Activated T-helper 1 cell treated with anti-CD3 and anti-CD28 coated beads, Interleukin-12 subunit alpha, Interleukin-12 subunit beta, Interleukin-2, Interleukin-4 antibody, amounts not matched to agents 30 ng/mL and 10 ng/mL and 1 ng/mL, durations not matched to agents 14 hours and 24 hours and 36 hours (primary cell): ENCODE measurements at regions of chr3 and their contacts with region 1.

Region 1: DNA sequence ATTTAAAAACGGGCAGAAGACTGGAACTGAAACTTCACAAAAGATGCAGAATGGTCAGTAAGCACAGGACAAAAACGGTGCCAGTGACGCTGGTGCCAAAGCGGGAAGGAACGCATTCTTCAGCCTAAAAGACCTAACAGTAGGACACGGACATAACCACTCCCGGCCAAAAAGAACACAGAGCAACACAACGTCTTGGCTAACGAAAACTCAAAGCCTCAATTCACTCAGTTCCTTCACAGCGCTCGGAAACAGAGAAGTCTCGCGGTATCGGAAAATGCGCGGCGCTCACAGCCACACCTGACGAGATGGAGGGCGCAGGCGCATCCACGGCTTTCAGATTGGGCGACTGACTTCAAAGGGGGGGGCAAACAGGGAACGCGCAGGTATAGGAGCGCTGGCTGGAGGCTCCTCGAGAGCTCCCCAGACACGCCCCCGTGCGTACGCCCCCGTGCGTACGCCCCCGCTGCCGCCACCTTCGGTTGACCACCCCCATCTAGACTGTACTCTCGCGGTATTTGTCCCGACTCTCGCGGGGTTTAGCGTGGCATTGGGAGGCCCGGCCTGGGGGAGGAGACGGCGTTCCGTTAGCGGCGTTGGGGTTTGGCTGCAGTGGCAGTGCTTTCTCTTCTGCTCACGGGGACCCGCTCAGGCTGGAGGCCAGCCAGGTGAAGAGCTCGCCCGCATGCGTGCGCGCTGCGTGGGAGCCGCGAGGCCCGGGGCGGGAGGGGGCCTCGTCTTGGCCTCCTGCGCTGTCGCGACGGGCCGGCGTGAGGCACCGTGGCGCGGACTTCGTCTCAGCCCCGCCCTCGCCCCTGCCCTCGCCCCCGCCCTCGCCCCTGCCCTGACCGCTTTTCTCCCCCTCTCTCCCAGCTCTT is at the start of gene NKTR:
- DNase-seq: peak; percentile 99
- H3K4me3 Mint-ChIP-seq: peak within 1 kb of the TSS; percentile 91
- H3K27ac Mint-ChIP-seq: peak within 1 kb of the TSS; percentile 98
- H3K4me1 Mint-ChIP-seq: peaks cover 40% of the 10 kb centered on the region
- H3K27me3 Mint-ChIP-seq: no peaks in the 10 kb centered on the region
- total RNA-seq, gene NKTR: 76.9 and 79.7 TPM in 2 replicates

Region 2: GRCh38 chr3:42486814-42487565 is 113.4 kb before region 1 on chr3:
- intact Hi-C with region 1: no loop called
- DNase-seq: no peak
- H3K4me3 Mint-ChIP-seq: no peak overlapping the region
- H3K27ac Mint-ChIP-seq: no peak overlapping the region
- H3K4me1 Mint-ChIP-seq: no peaks in the 10 kb centered on the region
- H3K27me3 Mint-ChIP-seq: peaks cover 17% of the 10 kb centered on the region

Region 3: DNA sequence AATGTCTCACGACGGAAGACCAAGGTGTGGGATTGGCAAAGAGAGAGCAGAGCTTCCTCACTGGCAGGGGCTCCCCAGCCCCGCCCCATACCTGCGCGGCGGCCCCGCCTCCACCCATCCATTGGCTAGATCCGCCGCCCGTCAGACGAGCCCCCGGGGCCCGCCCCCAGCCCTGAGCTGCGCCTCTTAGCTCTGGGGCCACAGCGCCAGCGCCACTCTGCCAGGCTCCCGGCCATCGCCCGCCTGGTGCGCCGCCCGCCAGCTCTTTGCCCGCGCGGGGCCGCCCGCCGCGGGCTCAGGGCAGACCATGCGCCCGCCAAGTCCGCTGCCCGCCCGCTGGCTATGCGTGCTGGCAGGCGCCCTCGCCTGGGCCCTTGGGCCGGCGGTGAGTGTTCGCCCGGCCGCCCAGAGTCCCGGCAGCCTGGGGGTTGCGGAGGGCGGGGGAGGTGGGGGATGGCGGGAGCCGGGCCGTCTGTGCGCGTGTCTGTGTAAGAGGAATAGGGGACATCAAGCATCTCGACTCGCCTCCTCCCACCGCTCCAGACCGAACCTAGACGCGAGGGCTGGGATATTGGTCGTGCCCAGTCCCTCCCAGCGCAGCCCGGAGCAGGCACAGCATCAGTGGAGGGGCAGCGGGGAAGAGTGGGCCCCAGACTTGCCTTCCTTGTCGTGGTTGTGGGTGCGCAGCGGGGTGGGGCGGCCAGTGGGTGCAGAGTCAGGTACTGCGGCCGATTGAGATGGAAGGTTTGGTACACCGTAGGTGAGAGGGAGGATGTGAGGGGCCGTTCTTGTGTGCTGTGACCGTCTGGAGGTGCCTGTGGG is 97.7 kb before region 1 on chr3 and contains the start of gene VIPR1:
- intact Hi-C with region 1: loop called (anchors 1 kb)
- DNase-seq: peak; percentile 85
- H3K4me3 Mint-ChIP-seq: peak within 1 kb of the TSS; percentile 86
- H3K27ac Mint-ChIP-seq: no peak within 1 kb of the TSS
- H3K4me1 Mint-ChIP-seq: peaks cover 31% of the 10 kb centered on the region
- H3K27me3 Mint-ChIP-seq: peaks cover 26% of the 10 kb centered on the region
- total RNA-seq, gene VIPR1: 0.69 and 0.88 TPM in 2 replicates

Region 4: GRCh38 chr3:42556089-42556632 is 44.2 kb before region 1 on chr3:
- intact Hi-C with region 1: loop called (anchors 1 kb)
- DNase-seq: peak; percentile 52
- H3K4me3 Mint-ChIP-seq: peak overlapping the region; percentile 52
- H3K27ac Mint-ChIP-seq: peak overlapping the region; percentile 94
- H3K4me1 Mint-ChIP-seq: peaks cover 41% of the 10 kb centered on the region
- H3K27me3 Mint-ChIP-seq: no peaks in the 10 kb centered on the region

Region 5: GRCh38 chr3:42581709-42582473 is 18.5 kb before region 1 on chr3 and contains the start of gene SEC22C:
- intact Hi-C with region 1: loop called (anchors 1 kb)
- DNase-seq: peak; percentile 93
- H3K4me3 Mint-ChIP-seq: peak within 1 kb of the TSS; percentile 90
- H3K27ac Mint-ChIP-seq: peak within 1 kb of the TSS; percentile 93
- H3K4me1 Mint-ChIP-seq: peaks cover 61% of the 10 kb centered on the region
- H3K27me3 Mint-ChIP-seq: peaks cover 1% of the 10 kb centered on the region
- total RNA-seq, gene SEC22C: 37.5 and 38.3 TPM in 2 replicates

Region 6: GRCh38 chr3:42652611-42653302 is 52.4 kb after region 1 on chr3:
- intact Hi-C with region 1: loop called (anchors 2 kb)
- DNase-seq: no peak
- H3K4me3 Mint-ChIP-seq: peak overlapping the region; percentile 85
- H3K27ac Mint-ChIP-seq: peak overlapping the region; percentile 63
- H3K4me1 Mint-ChIP-seq: peaks cover 23% of the 10 kb centered on the region
- H3K27me3 Mint-ChIP-seq: peaks cover 5% of the 10 kb centered on the region

Region 7: GRCh38 chr3:42772670-42773408 is 172.5 kb after region 1 on chr3 and contains the start of gene CCDC13:
- intact Hi-C with region 1: loop called (anchors 1 kb)
- DNase-seq: peak; percentile 86
- H3K4me3 Mint-ChIP-seq: peak within 1 kb of the TSS; percentile 85
- H3K27ac Mint-ChIP-seq: peak within 1 kb of the TSS; percentile 85
- H3K4me1 Mint-ChIP-seq: peaks cover 12% of the 10 kb centered on the region
- H3K27me3 Mint-ChIP-seq: peaks cover 9% of the 10 kb centered on the region
- total RNA-seq, gene CCDC13: 0.32 TPM in 1 of 2 replicates, not detected in the other

Region 8: DNA sequence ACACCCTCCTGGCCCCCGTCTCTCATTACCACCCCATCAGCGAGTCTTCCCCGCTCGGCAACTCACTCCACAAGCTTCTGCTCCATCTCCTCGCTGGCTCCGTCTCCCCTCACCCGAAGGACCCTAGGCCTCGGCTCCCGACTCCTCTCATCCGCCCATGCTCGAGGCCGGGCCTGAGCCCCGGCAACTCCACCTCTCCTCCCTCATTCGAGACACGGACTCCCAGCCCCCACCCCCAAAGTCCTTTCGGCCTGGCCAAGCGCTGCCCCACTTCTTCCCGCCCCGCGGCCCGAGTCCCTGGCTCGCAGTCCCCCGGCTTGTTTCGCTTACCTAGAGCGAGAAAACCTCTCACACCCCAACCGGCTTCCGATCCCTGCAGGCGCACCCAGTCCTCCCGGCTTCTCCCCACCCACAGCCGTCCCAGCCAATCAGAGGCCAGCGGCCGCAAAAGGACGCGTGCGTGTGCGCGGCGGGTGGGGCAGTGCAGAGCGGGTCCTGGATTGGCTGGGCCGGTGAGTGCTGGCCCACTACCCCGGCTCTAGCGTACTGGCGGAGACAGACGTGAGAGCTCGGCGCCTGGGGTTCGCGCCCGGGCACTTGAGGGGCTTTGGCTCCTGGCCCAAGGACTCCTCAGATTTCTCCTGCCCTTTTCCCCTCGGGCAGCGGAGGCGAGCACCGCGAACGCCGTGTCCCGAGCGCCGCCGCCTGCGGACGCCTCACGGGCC is 203.9 kb after region 1 on chr3 and contains the start of gene HIGD1A:
- intact Hi-C with region 1: loop called (anchors 1 kb)
- DNase-seq: peak; percentile 92
- H3K4me3 Mint-ChIP-seq: peak within 1 kb of the TSS; percentile 99
- H3K27ac Mint-ChIP-seq: peak within 1 kb of the TSS; percentile 90
- H3K4me1 Mint-ChIP-seq: peaks cover 43% of the 10 kb centered on the region
- H3K27me3 Mint-ChIP-seq: peaks cover 27% of the 10 kb centered on the region
- total RNA-seq, gene HIGD1A: 90.1 and 97.5 TPM in 2 replicates

Region 9: DNA sequence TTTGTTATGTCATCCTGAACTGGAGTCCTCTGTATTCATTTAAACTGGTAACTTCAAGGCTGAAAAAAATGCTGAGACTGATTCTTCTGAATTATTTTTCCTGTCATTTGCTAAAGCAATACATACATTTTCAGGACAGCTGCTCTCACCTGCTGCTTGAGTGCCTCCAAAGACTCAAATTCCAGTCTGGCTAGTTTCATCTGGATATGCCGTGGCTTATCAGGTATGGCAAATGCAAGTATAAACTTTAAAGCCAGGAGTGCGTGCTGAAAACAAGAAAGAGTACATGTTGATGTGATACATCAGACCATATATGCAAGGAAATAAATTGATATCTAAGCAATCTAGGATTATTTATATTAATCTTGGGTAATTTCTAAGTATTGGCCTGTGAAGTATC is 832.1 kb after region 1 on chr3:
- intact Hi-C with region 1: no loop called
- DNase-seq: no peak
- H3K4me3 Mint-ChIP-seq: no peak overlapping the region
- H3K27ac Mint-ChIP-seq: no peak overlapping the region
- H3K4me1 Mint-ChIP-seq: no peaks in the 10 kb centered on the region
- H3K27me3 Mint-ChIP-seq: peaks cover 4% of the 10 kb centered on the region